Right cardiac atrium (tissue), 5 donors: ENCODE measurements at regions of chr1 and their contacts with region 1.

Region 1: GRCh38 chr1:206544562-206545257 is 37.4 kb downstream of the RASSF5 start:
- DNase-seq: peak; percentile 68 to 89 (median 87)
- ATAC-seq: peak; percentile 46 to 69
- H3K4me3 ChIP-seq: no peak overlapping the region
- H3K27ac ChIP-seq: no peak overlapping the region
- H3K4me1 ChIP-seq: peaks cover 5% of the 10 kb centered on the region
- H3K27me3 ChIP-seq: no peaks in the 10 kb centered on the region

Region 2: DNA sequence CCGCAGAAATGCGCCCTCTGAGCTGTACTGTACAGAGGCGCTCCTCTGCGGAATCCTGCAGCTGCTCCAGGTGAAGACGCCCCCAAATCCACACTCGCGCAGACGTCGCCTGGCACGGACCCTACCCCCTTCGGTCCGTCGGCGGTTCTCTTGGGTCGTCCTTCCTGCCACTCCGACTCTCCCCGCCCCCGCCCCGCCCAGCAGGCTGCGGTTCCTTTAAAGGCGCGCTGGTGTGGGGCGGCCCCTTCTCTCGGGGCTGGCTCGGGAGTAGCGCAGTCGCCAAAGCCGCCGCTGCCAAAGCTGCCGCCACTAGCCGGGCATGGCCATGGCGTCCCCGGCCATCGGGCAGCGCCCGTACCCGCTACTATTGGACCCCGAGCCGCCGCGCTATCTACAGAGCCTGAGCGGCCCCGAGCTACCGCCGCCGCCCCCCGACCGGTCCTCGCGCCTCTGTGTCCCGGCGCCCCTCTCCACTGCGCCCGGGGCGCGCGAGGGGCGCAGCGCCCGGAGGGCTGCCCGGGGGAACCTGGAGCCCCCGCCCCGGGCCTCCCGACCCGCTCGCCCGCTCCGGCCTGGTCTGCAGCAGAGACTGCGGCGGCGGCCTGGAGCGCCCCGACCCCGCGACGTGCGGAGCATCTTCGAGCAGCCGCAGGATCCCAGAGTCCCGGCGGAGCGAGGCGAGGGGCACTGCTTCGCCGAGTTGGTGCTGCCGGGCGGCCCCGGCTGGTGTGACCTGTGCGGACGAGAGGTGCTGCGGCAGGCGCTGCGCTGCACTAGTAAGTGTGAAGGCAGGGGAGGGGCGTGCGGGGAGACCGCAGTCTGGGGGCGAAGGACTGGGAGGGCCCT is 37.2 kb before region 1 on chr1 and contains the start of gene RASSF5:
- intact Hi-C with region 1: loop called in 1 of 4 experiments (anchors 5 kb)
- DNase-seq: peak; percentile 87 to 96 (median 95)
- ATAC-seq: peak; percentile 84 to 89
- H3K4me3 ChIP-seq: peak within 1 kb of the TSS; percentile 73
- H3K27ac ChIP-seq: no peak within 1 kb of the TSS
- H3K4me1 ChIP-seq: peaks cover 9% of the 10 kb centered on the region
- H3K27me3 ChIP-seq: no peaks in the 10 kb centered on the region
- total RNA-seq, gene RASSF5: 17.4 to 29.0 (median 22.0) TPM

Region 3: GRCh38 chr1:206612129-206612876 is 67.6 kb after region 1 on chr1 and contains the start of gene EIF2D:
- intact Hi-C with region 1: no loop called
- DNase-seq: peak; percentile 94 to 98 (median 98)
- ATAC-seq: peak; percentile 99
- H3K4me3 ChIP-seq: peak within 1 kb of the TSS; percentile 69
- H3K27ac ChIP-seq: peak within 1 kb of the TSS; percentile 97
- H3K4me1 ChIP-seq: no peaks in the 10 kb centered on the region
- H3K27me3 ChIP-seq: no peaks in the 10 kb centered on the region
- total RNA-seq, gene EIF2D: 24.6 to 28.0 (median 25.8) TPM